BJ (cell line): ENCODE measurements at regions of chr1 and their contacts with region 1.

Region 1: GRCh38 chr1:24847995-24848881 is 81.8 kb downstream of the RUNX3 start:
- DNase-seq: peak; percentile 40
- H3K4me3 ChIP-seq: peak overlapping the region; percentile 29
- H3K27me3 ChIP-seq: no peaks in the 10 kb centered on the region
- CTCF ChIP-seq: peak; percentile 97

Region 2: GRCh38 chr1:24652382-24652781 is 195.9 kb before region 1 on chr1:
- CTCF ChIA-PET with region 1: no interaction called
- POLR2A ChIA-PET with region 1: no interaction called
- DNase-seq: no peak
- H3K4me3 ChIP-seq: no peak overlapping the region
- H3K27me3 ChIP-seq: no peaks in the 10 kb centered on the region
- CTCF ChIP-seq: no peak

Region 3: DNA sequence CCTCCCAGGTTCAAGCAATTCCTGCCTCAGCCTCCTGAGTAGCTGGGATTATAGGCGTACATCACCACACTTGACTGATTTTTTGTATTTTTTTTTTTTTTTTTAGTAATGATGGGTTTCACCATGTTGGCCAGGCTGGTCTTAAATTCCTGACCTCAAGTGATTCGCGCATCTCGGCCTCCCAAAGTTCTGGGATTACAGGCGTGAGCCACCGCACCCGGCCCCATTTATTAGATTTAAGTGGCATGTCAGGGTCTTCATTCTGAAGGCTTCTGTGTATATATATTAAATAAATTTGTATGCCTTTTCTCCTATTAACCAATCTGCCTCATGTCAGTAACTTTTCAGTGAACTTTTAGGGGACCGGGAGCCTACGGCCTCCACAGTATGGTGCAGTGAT is 109.0 kb before region 1 on chr1:
- CTCF ChIA-PET with region 1: no interaction called
- POLR2A ChIA-PET with region 1: no interaction called
- DNase-seq: no peak
- H3K4me3 ChIP-seq: no peak overlapping the region
- H3K27me3 ChIP-seq: no peaks in the 10 kb centered on the region
- CTCF ChIP-seq: no peak

Region 4: DNA sequence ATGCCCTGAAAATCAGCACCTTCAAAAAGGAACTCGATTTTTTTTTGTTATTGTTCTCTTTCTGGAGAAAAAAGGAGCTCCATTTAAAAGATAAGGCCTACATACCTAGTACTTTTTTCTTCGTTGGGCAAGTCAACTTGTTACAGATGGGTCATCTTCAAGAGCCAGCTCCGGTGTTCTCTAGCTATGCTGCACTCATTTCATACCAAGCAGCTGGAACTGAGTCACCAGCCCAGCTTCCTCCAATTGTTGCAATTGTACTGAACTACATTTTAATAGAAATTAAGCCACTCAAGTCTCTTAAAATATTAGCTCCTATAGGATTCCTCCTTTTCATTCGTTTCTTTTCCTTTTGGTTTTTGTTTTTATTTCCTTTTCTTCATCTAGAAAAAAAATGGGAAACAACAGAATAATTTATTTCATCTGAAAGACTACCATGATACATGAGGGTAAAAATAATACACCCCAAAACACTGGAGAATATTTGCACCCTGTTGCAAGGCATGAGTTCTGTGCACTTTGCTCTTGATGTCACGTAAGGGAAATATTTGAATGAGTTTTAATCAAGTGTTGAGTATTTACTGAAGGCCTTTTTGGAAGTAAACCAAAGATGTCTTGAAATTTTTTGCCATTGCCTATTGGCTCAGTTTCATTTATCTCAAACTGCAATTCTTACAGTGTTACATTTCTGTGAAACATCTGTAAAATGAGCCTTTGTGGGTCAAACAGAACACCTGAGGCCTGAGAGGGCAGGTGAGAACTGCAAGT is 42.5 kb before region 1 on chr1:
- CTCF ChIA-PET with region 1: no interaction called
- POLR2A ChIA-PET with region 1: no interaction called
- DNase-seq: peak; percentile 51
- H3K4me3 ChIP-seq: no peak overlapping the region
- H3K27me3 ChIP-seq: no peaks in the 10 kb centered on the region
- CTCF ChIP-seq: no peak

Region 5: GRCh38 chr1:24830680-24831272 is 17.5 kb before region 1 on chr1:
- CTCF ChIA-PET with region 1: interaction called, 20 read pairs
- POLR2A ChIA-PET with region 1: no interaction called
- DNase-seq: peak; percentile 20
- H3K4me3 ChIP-seq: no peak overlapping the region
- H3K27me3 ChIP-seq: no peaks in the 10 kb centered on the region
- CTCF ChIP-seq: peak; percentile 69

Region 6: DNA sequence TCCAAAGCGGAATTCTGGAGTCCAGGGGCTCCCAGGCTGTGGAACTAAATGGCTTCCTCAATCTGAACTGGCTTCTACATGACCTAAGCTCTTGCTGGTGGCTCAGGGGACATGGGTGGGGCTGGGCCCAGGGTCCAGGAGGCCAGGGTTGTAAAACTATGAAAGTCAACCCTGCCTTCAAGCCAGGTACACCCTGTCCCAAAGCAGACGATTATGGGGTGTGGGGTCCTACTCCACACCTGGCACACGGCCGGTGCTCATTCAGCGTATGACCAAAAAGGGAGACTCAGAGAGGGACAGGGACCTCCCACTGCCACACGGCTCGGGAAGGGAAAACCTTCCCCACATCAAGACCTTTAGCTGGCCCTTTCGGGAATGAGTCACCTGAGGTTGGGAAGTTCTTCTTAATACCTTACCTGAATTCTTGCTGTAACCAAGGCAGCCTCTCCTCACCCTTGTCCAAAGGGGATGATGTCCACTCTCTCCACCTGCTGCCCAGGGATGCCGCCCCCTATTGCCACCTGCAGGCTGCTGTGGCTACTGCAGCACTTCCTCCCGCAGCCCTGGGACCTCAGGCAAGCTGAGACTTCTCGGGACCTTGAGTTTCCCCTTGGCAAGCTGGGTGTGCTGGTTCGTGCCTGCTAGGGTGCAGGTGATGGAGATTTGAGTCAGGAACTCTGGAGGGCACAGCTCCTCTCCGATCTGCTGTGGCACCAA is 49.7 kb after region 1 on chr1:
- CTCF ChIA-PET with region 1: interaction called, 17 read pairs
- POLR2A ChIA-PET with region 1: no interaction called
- DNase-seq: no peak
- H3K4me3 ChIP-seq: no peak overlapping the region
- H3K27me3 ChIP-seq: peaks cover 3% of the 10 kb centered on the region; the same call in 1 of the 2 replicates
- CTCF ChIP-seq: peak; percentile 93

Region 7: GRCh38 chr1:25099343-25099951 is 251.2 kb after region 1 on chr1:
- CTCF ChIA-PET with region 1: interaction called, 12 read pairs
- POLR2A ChIA-PET with region 1: no interaction called
- DNase-seq: no peak
- H3K4me3 ChIP-seq: no peak overlapping the region
- H3K27me3 ChIP-seq: peaks cover 14% of the 10 kb centered on the region
- CTCF ChIP-seq: no peak

Region 8: GRCh38 chr1:25204797-25205480 is 356.7 kb after region 1 on chr1:
- CTCF ChIA-PET with region 1: interaction called, 29 read pairs
- POLR2A ChIA-PET with region 1: no interaction called
- DNase-seq: no peak
- H3K4me3 ChIP-seq: no peak overlapping the region
- H3K27me3 ChIP-seq: peaks cover 7% of the 10 kb centered on the region
- CTCF ChIP-seq: peak; percentile 70